ENCODE measurements at regions of chr13 and their contacts with region 1.

Region 1: GRCh38 chr13:53260594-53260993 is 232.0 kb downstream of the OLFM4 start:
- DNase-seq: no peak
- H3K4me3 ChIP-seq: no peak overlapping the region
- H3K4me3 Mint-ChIP-seq: no peak overlapping the region
- H3K27ac ChIP-seq: no peak overlapping the region
- H3K27ac Mint-ChIP-seq: no peak overlapping the region
- H3K4me1 ChIP-seq: no peaks in the 10 kb centered on the region
- H3K4me1 Mint-ChIP-seq: no peaks in the 10 kb centered on the region
- H3K27me3 ChIP-seq: no peaks in the 10 kb centered on the region
- H3K27me3 Mint-ChIP-seq: peaks cover 3 to 7% of the 10 kb centered on the region in 2 donors

Region 2: GRCh38 chr13:52804202-52804641 is 456.4 kb before region 1 on chr13:
- CTCF ChIA-PET with region 1: no interaction called
- POLR2A ChIA-PET with region 1: no interaction called
- intact Hi-C with region 1: no loop called
- DNase-seq: no peak
- H3K4me3 ChIP-seq: no peak overlapping the region
- H3K4me3 Mint-ChIP-seq: no peak overlapping the region
- H3K27ac ChIP-seq: no peak overlapping the region
- H3K27ac Mint-ChIP-seq: no peak overlapping the region
- H3K4me1 ChIP-seq: no peaks in the 10 kb centered on the region
- H3K4me1 Mint-ChIP-seq: no peaks in the 10 kb centered on the region
- H3K27me3 ChIP-seq: no peaks in the 10 kb centered on the region
- H3K27me3 Mint-ChIP-seq: peaks cover 13% of the 10 kb centered on the region in 2 donors

Region 3: DNA sequence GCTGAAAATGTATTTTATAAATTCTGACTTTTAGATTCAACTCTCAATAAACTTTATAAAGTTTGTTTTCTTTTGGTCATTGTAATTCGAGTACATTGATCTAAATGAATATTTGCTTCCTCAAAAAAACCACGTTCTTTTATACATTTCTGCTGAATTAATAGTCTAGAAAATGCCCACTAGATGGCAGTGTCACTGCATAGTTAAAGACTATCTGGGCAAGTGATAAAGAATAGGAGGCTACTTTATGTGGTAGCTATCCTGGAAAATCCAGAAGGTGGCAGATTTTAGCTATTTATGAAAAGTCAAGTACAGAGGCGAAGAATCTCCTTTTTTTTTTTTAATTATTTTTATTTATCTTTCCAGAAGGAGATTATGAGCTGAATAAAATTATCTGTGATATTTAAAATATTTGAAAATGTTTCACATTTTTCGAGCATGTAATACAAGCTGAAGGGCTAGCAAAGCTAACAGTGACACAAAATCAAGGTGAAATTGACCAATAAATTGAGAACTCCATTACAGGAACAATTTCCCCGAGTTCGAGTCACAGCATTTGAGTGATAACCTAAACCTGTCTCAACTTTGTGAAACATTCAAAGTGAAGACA is 10.2 kb before region 1 on chr13:
- CTCF ChIA-PET with region 1: interaction called, 17 read pairs
- POLR2A ChIA-PET with region 1: no interaction called
- intact Hi-C with region 1: no loop called
- DNase-seq: peak in 4 of 5 donors; percentile 2 to 22 (median 11)
- H3K4me3 ChIP-seq: no peak overlapping the region
- H3K4me3 Mint-ChIP-seq: no peak overlapping the region
- H3K27ac ChIP-seq: no peak overlapping the region
- H3K27ac Mint-ChIP-seq: no peak overlapping the region
- H3K4me1 ChIP-seq: no peaks in the 10 kb centered on the region
- H3K4me1 Mint-ChIP-seq: no peaks in the 10 kb centered on the region
- H3K27me3 ChIP-seq: no peaks in the 10 kb centered on the region
- H3K27me3 Mint-ChIP-seq: no peaks in the 10 kb centered on the region